HEK293T (cell line): ENCODE measurements at regions of chr2 and their contacts with region 1.

Region 1: DNA sequence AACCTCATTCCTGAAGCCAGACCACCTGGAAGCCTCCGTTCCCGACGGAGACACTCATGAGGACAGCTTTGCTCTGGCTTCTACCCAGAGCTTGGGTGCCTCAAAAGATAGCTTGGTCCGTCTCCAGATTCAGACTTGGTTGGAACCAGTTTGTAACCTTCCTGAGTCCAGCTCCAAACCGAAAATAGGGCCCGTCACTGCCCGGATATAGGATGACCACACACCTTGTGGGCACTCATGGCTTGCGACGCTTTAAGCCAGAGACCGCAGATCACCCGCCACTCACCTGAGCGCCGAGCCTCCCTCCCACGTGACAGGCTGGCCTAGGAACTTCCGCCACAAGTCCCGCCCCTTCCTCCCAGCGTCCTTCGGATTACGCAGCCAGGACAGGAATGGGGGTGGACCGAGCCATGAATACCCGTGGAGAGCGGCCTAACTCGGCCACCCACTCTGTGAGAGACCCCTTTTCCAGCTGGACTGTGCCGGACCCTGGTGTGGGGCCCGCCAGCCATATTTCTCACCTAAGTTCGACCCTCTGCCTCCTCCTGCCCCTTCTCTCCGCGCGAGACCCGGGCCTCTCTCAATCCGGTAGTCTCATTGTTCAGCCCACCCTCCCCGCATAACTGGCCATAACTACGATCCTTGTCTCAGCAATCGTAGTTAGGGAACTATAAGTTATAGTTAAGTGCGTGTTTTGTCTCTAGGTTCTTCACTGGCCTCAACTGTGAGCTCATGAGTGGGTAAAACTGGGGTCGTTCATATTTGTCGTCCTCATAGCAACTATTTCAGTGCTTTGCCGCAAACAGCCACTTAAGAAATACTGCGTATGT is at the start of gene MPV17:
- DNase-seq: peak; percentile 95

Region 2: GRCh38 chr2:27335311-27335710 is 12.3 kb after region 1 on chr2:
- CTCF ChIA-PET with region 1: interaction called, 3 read pairs
- POLR2A ChIA-PET with region 1: interaction called, 12 read pairs
- DNase-seq: no peak